Calu3 (cell line): ENCODE measurements at regions of chr20 and their contacts with region 1.

Region 1: DNA sequence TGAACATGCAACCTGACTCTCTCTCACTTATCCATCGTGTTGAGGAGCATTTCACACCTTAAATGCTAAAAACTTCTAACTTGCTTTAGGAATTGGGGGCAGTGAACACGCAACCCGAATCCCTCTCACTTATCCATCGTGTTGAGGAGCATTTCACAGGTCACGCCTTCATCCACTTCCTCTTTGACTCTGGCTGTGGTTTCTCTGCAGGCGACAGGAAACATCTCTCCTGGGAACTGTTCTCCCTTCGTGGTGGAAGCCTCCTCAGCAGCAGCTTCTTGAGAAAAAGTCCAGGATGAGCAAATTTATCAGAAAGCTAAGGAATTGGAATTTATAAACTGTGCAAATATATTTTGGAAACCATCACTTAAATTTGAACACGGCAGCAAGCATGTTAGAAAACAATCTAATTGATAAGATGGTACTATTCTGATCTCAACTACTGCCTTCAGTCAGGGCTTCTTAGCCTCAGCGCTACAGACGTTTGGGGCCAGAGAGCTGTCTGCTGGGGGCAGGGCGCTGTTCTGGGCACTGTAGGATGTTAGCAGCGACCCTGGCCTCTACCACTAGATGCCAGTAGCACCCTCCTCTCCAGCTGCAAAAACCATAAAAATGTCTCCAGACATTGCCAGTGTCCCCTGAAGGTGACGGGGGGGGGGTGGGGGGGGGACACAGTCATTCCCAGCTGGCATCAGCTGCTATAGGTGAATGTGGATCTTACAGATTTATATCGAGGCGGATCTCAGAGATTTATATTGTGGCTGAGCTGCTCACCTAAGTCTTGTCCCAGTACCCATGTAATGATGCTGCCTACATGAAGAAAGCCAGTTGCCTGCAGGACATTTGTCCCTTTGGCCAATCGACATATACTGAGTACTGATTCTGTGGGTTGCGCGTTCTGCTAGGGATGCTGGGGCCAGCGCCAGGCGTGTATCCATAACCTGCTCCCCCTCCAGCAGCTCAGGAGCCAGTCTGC is 26.2 kb downstream of the CTCFL start:
- DNase-seq: peak; percentile 68
- H3K4me3 Mint-ChIP-seq: no peak overlapping the region
- H3K27ac Mint-ChIP-seq: no peak overlapping the region
- H3K4me1 Mint-ChIP-seq: peaks cover 8% of the 10 kb centered on the region
- H3K27me3 Mint-ChIP-seq: peaks cover 93% of the 10 kb centered on the region
- CTCF ChIP-seq: peak; percentile 75

Region 2: DNA sequence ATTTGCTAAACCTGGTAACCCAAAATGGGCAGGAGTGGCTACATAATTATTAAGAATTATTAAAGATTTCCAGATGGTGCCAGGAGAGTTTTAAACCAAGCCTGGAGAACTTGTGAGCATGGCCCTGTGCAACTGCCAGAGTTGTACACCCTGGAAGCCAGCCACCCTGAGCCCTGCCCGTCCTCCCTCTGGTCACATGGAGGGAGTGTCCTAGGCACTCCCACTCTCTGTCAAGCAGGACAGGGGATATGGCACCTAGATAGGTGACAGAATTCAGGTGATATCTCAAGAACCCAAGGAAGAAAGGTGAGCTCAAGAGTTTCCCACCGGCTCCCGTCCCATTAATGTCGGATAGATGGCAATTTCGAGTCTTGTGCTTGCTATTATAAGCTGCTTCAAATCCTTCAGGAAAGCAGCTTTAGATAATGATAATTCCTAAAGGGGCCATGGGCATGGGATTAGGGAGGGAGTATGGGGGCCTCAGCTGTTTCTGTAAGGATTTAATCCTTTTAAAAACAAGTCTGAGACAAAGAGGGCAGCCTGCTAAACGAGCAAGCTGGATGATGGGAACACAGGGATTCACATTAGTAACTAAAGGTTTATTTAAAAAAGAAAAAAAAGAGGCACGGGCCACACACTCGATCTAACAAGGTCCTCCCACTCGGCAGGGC is 401.3 kb before region 1 on chr20:
- CTCF ChIA-PET with region 1: no interaction called
- intact Hi-C with region 1: loop called (anchors 5 kb)
- DNase-seq: no peak
- H3K4me3 Mint-ChIP-seq: no peak overlapping the region
- H3K27ac Mint-ChIP-seq: no peak overlapping the region
- H3K4me1 Mint-ChIP-seq: peaks cover 3% of the 10 kb centered on the region
- H3K27me3 Mint-ChIP-seq: peaks cover 100% of the 10 kb centered on the region
- CTCF ChIP-seq: no peak

Region 3: DNA sequence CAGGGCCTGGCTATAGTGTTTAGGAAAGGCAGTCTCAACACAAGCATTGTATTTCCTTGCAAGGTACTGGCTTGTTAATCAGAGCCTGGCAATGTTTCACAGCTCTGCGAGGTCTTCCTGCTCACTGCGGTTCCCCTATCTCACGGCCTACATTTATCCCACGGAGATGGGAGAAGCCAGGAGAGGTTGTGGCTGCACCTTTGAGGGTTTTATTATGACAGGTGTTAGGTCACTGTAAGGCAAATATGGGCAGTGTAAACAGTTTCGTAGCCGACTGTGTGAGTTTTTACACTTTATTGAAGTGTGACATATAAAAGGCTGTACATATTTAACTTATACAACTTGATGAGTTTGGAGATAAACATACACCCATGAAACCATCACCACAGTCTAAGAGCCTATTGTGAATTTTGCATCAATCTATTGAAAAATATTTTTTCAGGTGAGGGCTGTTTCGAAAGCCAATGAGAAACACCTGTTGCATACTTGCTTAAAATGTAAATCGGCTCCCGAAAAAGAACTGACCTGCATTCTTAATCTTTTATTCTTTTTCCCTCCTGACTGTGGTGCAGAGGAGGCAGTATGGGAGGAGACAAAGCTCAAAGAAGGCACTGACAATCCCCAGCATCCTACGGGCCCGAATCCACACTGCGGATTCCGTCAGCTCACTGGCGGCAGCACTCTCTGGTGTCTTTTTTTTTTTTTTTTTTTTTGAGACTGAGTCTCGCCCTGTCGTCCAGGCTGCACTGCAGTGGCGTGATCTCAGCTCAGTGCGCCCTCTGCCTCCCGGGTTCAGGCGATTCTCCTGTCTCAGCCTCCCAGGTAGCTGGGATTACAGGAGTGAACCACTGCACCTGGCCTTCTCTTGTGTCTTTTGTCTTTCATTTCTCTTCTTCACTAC is 115.0 kb before region 1 on chr20:
- CTCF ChIA-PET with region 1: interaction called, 6 read pairs
- intact Hi-C with region 1: loop called (anchors 1 kb)
- DNase-seq: no peak
- H3K4me3 Mint-ChIP-seq: no peak overlapping the region
- H3K27ac Mint-ChIP-seq: no peak overlapping the region
- H3K4me1 Mint-ChIP-seq: no peaks in the 10 kb centered on the region
- H3K27me3 Mint-ChIP-seq: no peaks in the 10 kb centered on the region
- CTCF ChIP-seq: no peak

Region 4: DNA sequence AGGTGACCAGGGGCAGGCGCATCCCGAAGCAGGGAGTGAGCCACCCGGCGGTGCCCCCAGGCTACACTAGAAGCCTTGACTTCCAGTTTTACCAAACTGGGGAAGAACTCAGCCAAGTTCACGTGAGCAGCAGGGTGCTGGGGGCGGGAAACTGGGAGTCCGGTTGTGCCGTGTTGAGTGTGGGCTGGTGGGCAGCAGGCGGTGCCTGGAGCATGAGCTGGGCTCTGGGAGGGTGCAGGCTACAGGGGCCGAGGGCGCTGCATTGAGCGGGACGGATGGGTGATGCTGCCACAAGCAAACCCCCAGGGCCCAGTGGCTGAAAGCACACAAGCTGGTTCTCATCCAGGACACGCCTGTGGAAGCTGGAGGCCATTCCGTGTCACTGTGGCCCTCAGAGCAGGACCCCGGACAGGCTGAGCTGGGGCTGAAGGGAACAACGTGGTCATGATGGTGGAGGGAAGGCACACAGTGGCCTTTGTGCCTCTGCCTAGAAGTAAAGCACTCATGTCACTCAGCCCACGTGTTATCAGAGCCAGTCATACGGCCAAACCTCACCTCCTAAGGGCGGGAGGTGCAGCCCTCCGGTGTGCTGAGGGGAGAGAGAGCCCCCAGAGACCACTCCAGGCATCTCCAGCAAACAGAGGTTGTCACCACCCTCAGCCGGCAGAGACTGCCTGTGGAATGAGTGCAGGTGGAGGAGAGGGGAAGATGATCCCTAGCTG is 78.0 kb before region 1 on chr20:
- CTCF ChIA-PET with region 1: no interaction called
- intact Hi-C with region 1: loop called (anchors 1 kb)
- DNase-seq: peak; percentile 56
- H3K4me3 Mint-ChIP-seq: no peak overlapping the region
- H3K27ac Mint-ChIP-seq: no peak overlapping the region
- H3K4me1 Mint-ChIP-seq: peaks cover 30% of the 10 kb centered on the region
- H3K27me3 Mint-ChIP-seq: peaks cover 91% of the 10 kb centered on the region
- CTCF ChIP-seq: no peak

Region 5: DNA sequence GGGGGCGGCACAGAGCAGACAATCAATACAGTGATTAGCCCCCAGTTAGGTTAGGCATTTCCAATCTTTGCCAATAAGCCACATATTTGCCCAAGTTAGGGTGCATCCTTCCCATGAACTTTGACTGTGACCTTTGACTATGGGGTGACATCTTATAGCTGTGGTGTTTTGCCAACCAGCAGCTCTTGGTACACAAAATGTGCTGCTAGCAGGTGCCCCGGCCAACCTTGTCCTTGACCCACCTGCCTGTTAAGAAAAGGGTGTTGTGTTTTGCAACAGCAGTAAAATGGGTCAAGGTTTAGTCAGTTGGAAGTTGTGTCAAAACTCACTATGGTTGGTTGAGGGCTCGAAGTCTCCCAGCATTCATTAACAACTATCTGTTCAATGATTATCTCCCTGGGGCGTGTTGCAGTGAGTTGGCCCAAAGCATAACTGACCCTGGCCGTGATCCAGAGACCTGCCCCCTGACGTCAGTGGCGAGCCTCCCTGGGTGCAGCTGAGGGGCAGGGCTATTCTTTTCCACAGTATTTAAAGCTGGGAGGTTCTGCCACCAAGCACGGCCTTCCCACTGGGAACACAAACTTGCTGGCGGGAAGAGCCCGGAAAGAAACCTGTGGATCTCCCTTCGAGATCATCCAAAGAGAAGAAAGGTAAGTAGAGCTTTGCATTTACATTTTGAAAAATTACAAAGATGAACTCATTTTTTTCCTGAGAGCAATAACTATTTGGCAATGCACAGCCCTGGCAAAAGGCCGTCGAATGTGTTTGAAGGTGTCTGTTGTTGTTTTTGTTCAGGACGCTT is 62.0 kb after region 1 on chr20 and contains the start of gene PCK1:
- CTCF ChIA-PET with region 1: no interaction called
- intact Hi-C with region 1: no loop called
- DNase-seq: peak; percentile 96
- H3K4me3 Mint-ChIP-seq: no peak within 1 kb of the TSS
- H3K27ac Mint-ChIP-seq: peak within 1 kb of the TSS; percentile 43
- H3K4me1 Mint-ChIP-seq: peaks cover 38% of the 10 kb centered on the region
- H3K27me3 Mint-ChIP-seq: peaks cover 50% of the 10 kb centered on the region
- CTCF ChIP-seq: no peak
- total RNA-seq, gene PCK1: 0.12 and 0.19 TPM in 2 replicates

Region 6: DNA sequence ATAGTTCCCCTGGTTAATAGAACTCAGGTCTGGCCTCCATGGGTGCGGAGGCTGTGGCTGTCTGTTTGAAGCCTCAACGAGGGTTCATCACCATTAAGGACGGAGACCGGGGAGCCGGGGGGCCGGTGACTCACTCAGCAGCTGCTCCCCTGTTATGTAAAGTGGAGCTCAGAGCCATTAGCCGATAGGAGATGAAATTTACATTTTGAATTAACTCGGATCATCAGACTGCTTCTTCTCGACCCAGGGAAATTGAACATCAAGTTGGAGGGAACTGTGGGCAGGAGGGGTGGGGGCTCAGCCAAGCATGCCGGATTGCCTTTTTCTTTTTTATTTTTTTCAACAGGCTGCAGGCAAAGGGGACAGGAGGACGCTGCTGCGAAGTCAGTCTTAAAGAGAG is 74.5 kb after region 1 on chr20:
- CTCF ChIA-PET with region 1: no interaction called
- intact Hi-C with region 1: no loop called
- DNase-seq: no peak
- H3K4me3 Mint-ChIP-seq: no peak overlapping the region
- H3K27ac Mint-ChIP-seq: no peak overlapping the region
- H3K4me1 Mint-ChIP-seq: no peaks in the 10 kb centered on the region
- H3K27me3 Mint-ChIP-seq: no peaks in the 10 kb centered on the region
- CTCF ChIP-seq: no peak